ENCODE measurements at regions of chr6 and their contacts with region 1.

Region 1: GRCh38 chr6:161370880-161371279 is 97.0 kb upstream of the AGPAT4 start:
- DNase-seq: peak; percentile 76
- ATAC-seq: peak; percentile 89
- H3K4me3 Mint-ChIP-seq: no peak overlapping the region
- H3K27ac Mint-ChIP-seq: no peak overlapping the region
- H3K4me1 Mint-ChIP-seq: no peaks in the 10 kb centered on the region
- H3K27me3 Mint-ChIP-seq: no peaks in the 10 kb centered on the region

Region 2: DNA sequence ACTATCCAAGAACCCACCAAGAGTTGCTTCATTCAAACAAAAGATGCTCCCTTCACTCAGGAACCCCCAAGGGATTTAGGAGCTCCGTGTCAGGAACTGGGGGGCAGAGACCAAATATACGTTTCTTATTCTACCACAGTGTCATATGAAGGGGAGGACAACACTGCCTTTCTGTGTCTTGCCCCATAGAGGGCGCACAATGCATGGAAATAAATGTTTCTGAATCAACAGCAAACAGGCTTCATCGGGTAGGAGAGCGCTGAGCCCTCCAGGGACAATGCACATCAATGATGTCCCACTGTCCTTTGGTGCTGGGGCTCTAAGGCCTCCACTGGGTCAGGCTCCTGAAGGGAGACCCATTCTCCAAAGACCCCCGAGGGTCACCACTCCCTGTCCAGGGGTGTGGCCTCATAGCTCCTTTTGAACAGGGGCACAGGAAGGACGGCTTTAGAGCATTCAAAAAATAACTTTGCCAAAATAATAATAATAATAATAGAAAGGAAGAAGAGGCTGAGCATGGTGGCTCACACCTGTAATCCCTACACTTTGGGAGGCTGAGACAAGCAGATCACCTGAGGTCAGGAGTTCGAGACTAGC is 637.7 kb before region 1 on chr6:
- CTCF ChIA-PET with region 1: interaction called, 23 read pairs
- DNase-seq: peak; percentile 50
- ATAC-seq: peak; percentile 48
- H3K4me3 Mint-ChIP-seq: no peak overlapping the region
- H3K27ac Mint-ChIP-seq: no peak overlapping the region
- H3K4me1 Mint-ChIP-seq: peaks cover 8% of the 10 kb centered on the region
- H3K27me3 Mint-ChIP-seq: peaks cover 16% of the 10 kb centered on the region

Region 3: GRCh38 chr6:160930547-160931377 is 440.1 kb before region 1 on chr6:
- CTCF ChIA-PET with region 1: interaction called, 179 read pairs
- DNase-seq: peak; percentile 56
- ATAC-seq: peak; percentile 69
- H3K4me3 Mint-ChIP-seq: no peak overlapping the region
- H3K27ac Mint-ChIP-seq: no peak overlapping the region
- H3K4me1 Mint-ChIP-seq: peaks cover 5% of the 10 kb centered on the region
- H3K27me3 Mint-ChIP-seq: peaks cover 45% of the 10 kb centered on the region

Region 4: GRCh38 chr6:161152907-161153662 is 217.8 kb before region 1 on chr6:
- CTCF ChIA-PET with region 1: interaction called, 14 read pairs
- DNase-seq: no peak
- ATAC-seq: peak; percentile 45
- H3K4me3 Mint-ChIP-seq: no peak overlapping the region
- H3K27ac Mint-ChIP-seq: no peak overlapping the region
- H3K4me1 Mint-ChIP-seq: no peaks in the 10 kb centered on the region
- H3K27me3 Mint-ChIP-seq: no peaks in the 10 kb centered on the region

Region 5: GRCh38 chr6:161273752-161274487 is 97.0 kb before region 1 on chr6 and contains the start of gene AGPAT4:
- CTCF ChIA-PET with region 1: interaction called, 10 read pairs
- DNase-seq: peak; percentile 82
- ATAC-seq: peak; percentile 95
- H3K4me3 Mint-ChIP-seq: peak within 1 kb of the TSS; percentile 78
- H3K27ac Mint-ChIP-seq: peak within 1 kb of the TSS; percentile 91
- H3K4me1 Mint-ChIP-seq: peaks cover 19% of the 10 kb centered on the region
- H3K27me3 Mint-ChIP-seq: peaks cover 11% of the 10 kb centered on the region
- total RNA-seq, gene AGPAT4: 3.1 to 4.1 TPM